PC-9 (cell line): ENCODE measurements at regions of chr17 and their contacts with region 1.

Region 1: DNA sequence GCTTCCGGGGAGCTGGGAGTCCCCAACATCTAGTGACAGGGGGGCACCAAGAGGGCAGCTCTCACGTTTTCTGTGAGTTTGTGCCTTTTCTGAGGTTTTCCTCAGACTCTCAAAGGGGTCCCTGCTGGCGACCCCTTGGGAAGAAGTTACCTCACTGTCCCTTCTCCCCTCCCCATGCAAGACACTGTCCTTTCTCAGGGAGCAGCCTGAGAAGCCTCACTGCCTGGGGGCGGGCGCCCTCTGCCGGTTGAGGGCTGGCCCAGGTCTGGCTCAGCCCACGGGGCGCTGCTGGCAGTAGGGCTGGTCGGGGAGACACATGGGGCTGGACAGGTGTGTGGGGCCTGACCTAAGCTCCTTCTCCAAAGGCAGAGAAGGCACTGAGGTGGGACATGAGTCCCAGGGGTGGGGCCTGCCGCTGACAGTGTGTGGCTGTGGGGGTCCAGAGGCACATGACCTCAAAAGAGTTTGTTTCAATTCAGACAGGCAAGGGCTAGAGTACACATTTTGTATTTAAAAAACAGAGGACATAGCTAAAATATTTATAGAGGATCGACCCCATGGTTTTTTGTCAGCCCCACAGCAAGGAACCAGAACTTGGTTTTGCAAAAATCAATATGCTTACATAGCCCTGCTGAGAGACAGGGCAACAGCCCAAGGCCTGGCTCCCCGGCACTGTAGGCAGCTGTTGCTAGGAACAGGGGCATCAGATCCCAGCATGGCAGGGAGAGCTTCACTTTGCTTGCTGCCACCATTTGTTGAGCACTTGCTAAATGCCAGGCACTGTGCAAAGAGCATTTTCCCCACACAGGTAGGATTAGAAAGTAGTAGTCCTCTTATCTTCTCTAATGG is 18.5 kb upstream of the ALDH3A1 start:
- DNase-seq: peak in 1 of 2 experiments; percentile 85
- H3K4me3 ChIP-seq: no peak overlapping the region
- H3K27ac ChIP-seq: no peak overlapping the region
- H3K4me1 ChIP-seq: peaks cover 9% of the 10 kb centered on the region
- H3K27me3 ChIP-seq: no peaks in the 10 kb centered on the region
- CTCF ChIP-seq: peak; percentile 98

Region 2: DNA sequence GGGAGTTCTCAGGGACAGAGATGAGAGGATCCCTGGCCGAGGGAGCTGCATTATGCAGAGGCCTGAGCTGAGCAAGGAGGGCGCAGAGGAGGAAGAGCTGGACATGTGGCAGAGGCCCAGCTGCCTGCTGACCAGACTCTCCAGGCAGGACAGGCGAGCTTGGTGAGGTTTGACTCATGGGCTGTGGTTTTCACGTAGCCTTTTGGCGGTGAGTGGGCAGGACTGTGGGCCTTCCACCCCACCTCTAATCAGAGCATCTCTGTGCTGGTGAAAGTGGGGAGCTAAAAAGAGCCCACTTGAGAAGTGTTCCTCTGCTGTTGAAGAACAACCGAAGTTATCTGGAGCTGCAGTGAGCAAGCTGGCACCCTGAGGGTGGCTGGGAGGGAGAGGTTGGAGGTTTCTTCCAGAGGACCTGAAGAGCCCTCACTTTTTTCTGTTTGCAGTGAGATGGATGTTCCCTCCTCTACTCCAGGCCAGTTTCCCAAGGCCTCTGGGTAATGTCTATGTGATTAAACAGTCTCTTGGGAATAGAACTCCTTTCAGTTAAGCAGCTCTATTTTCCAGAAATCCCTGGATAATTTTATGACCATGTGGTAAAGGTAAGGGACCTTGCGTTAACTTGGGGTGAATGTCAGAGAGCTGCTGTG is 517.6 kb before region 1 on chr17:
- CTCF ChIA-PET with region 1: no interaction called
- POLR2A ChIA-PET with region 1: interaction called, 10 read pairs
- intact Hi-C with region 1: no loop called
- DNase-seq: peak; percentile 79 to 82
- H3K4me3 ChIP-seq: no peak overlapping the region; the same call in 1 of the 2 replicates
- H3K27ac ChIP-seq: peak overlapping the region; percentile 54
- H3K4me1 ChIP-seq: peaks cover 38% of the 10 kb centered on the region
- H3K27me3 ChIP-seq: no peaks in the 10 kb centered on the region
- CTCF ChIP-seq: no peak

Region 3: GRCh38 chr17:19447085-19447583 is 319.5 kb before region 1 on chr17:
- CTCF ChIA-PET with region 1: no interaction called
- POLR2A ChIA-PET with region 1: no interaction called
- intact Hi-C with region 1: loop called (anchors 5 kb)
- DNase-seq: peak; percentile 53 to 73
- H3K4me3 ChIP-seq: no peak overlapping the region
- H3K27ac ChIP-seq: no peak overlapping the region
- H3K4me1 ChIP-seq: peaks cover 24% of the 10 kb centered on the region
- H3K27me3 ChIP-seq: no peaks in the 10 kb centered on the region
- CTCF ChIP-seq: peak; percentile 98

Region 4: DNA sequence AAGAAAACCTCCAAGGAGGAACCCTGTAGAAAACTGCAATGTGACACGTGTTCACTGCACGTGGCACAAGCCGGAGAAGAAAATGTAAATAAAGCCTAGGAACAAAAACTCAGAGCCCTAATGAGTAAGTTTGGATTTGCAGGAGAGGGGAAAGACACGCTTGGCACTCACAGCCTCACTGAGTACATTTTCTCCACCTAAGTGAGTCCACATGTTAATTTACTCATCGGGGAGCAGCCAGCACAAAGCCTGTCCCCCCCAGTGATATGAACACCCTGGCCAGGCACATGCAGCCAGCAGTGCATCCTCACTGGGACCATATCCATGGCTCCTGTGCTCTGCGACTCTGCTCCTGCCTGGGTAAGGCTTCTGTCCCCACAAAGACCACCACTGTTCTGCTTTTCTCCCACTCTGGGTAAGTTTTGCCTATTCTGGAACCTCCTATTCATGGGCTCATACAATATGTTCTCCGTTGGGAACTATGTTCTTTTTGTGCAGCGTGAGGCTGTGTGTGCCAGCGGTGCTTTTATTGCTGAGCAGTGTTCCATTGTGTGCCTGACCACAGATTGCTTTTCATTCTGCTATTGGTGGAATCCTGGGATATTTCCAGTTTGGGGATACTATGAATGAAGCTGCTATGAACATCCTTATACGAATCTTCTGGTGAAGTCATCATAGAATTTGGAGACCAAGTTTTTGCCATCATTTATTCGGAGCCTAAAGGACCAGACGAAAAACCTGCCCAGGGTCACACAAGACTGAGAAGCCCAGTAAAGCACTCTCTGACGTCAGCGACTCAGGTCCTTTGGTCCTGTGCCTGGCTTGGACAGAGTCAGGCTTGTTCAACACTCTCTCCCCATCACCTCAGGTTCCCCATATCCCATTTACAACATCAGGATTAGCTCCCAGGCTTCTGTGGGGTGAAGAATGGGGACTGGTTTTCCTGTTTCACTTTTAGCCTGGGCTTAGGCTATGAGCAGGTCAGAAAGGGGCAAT is 302.3 kb before region 1 on chr17:
- CTCF ChIA-PET with region 1: no interaction called
- POLR2A ChIA-PET with region 1: no interaction called
- intact Hi-C with region 1: loop called (anchors 5 kb)
- DNase-seq: no peak
- H3K4me3 ChIP-seq: no peak overlapping the region
- H3K27ac ChIP-seq: no peak overlapping the region
- H3K4me1 ChIP-seq: no peaks in the 10 kb centered on the region
- H3K27me3 ChIP-seq: no peaks in the 10 kb centered on the region
- CTCF ChIP-seq: no peak

Region 5: DNA sequence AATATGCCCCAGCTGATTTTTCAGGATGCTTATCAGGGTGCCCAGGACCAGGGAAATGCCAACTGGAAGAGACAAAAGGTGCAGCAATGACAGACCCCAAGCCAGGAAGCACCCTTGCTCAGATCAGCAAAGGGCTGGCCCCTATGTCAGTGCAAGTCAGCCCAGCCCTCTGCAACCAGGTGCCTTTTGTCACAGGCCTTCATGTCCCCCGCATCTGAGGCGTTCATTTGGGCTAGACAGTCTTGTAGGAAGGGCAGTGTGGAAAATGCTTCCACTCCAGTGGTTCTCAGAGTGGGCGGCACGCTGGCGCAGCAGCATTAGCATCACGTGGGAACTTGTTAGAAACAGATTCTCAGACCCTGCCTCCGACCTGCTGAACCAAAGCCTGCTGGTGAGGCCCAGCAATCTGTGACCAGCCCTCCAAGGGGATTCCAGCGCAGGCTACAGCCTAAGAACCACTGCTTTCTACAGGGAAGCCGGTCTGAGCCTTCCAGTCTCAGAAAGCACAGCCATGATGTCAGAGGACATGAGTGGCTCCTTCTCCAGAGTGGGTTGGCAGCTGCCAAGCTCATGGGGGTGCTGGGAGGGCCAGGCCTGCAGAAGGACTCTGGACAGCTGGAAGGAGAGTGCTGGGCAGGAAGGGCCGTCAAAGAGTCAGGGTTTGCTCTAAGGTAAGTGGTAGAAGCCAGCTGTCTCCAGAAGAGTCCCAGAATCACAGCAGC is 63.4 kb before region 1 on chr17:
- CTCF ChIA-PET with region 1: interaction called, 12 read pairs
- POLR2A ChIA-PET with region 1: no interaction called
- intact Hi-C with region 1: loop called (anchors 1 kb)
- DNase-seq: no peak
- H3K4me3 ChIP-seq: no peak overlapping the region
- H3K27ac ChIP-seq: no peak overlapping the region
- H3K4me1 ChIP-seq: peaks cover 13% of the 10 kb centered on the region; the same call in 1 of the 2 replicates
- H3K27me3 ChIP-seq: no peaks in the 10 kb centered on the region
- CTCF ChIP-seq: no peak

Region 6: DNA sequence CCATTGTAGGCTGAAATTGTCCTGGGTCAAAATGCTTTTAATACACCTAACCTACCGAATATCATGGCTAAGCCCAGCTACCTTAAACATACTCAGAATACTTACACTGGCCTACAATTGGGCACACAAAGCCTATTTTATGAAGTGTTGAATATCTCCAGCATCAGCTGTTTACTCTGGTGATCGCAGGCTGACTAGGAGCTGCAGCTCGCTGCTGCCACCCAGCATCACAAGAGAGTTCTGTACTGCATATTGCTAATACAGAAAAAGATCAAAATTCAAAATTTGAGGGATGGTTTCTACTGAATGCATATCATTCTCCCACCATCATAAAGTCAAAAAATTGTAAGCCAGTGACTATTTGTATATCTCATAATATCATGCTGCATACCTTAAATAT is 45.8 kb after region 1 on chr17:
- CTCF ChIA-PET with region 1: no interaction called
- POLR2A ChIA-PET with region 1: no interaction called
- intact Hi-C with region 1: no loop called
- DNase-seq: peak in 1 of 2 experiments; percentile 18
- H3K4me3 ChIP-seq: no peak overlapping the region
- H3K27ac ChIP-seq: no peak overlapping the region
- H3K4me1 ChIP-seq: no peaks in the 10 kb centered on the region
- H3K27me3 ChIP-seq: no peaks in the 10 kb centered on the region
- CTCF ChIP-seq: peak; percentile 64; the same call in 1 of the 2 replicates

Region 7: GRCh38 chr17:19876529-19877161 is 110.0 kb after region 1 on chr17:
- CTCF ChIA-PET with region 1: no interaction called
- POLR2A ChIA-PET with region 1: no interaction called
- intact Hi-C with region 1: no loop called
- DNase-seq: no peak
- H3K4me3 ChIP-seq: no peak overlapping the region
- H3K27ac ChIP-seq: no peak overlapping the region
- H3K4me1 ChIP-seq: no peaks in the 10 kb centered on the region
- H3K27me3 ChIP-seq: no peaks in the 10 kb centered on the region
- CTCF ChIP-seq: no peak